ENCODE measurements at regions of chr6 and their contacts with region 1.

Region 1: DNA sequence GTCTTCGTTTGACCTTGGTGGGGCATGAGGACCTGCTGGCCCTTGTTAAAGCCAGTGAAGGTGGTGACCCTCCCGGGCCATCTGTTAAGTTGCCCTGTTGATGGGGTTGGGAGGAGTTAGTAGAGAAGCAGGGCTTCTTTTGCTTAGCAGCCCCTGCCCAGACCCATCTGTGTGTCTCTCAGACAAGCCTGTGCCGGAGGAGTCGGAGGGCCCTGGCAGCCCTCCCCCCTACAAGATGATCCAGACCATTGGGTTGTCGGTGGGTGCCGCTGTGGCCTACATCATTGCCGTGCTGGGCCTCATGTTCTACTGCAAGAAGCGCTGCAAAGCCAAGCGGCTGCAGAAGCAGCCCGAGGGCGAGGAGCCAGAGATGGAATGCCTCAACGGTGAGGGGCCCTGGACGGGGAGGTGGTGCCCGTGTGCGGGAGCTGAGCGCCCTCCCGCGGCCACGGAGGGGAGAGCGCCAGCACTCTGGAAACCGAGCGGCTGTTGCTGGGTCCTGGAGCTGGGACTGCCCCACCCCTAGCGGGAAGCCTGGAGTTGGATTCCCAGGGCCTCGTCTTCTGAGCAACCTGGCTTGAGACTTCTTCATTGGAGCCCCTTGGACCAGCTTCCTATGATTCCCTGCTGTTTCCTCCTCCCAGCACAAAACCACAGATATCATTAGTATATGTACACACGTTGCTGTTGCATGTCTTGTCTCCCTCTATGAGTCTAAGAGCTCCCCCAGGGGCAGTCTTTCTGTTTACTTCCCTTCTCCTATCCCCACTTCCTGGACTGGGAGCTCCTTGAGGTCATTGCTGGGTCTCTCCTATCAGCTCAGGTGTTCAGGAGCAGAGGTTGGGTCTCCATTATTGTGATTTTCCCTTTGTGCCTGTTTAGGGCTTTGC is 27.6 kb upstream of the SRF start:
- DNase-seq: peak; percentile 79
- H3K4me3 ChIP-seq: no peak overlapping the region
- H3K27ac ChIP-seq: peak overlapping the region; percentile 23
- H3K4me1 ChIP-seq: peaks cover 21% of the 10 kb centered on the region
- H3K27me3 ChIP-seq: no peaks in the 10 kb centered on the region
- CTCF ChIP-seq: peak; percentile 88 to 98

Region 2: DNA sequence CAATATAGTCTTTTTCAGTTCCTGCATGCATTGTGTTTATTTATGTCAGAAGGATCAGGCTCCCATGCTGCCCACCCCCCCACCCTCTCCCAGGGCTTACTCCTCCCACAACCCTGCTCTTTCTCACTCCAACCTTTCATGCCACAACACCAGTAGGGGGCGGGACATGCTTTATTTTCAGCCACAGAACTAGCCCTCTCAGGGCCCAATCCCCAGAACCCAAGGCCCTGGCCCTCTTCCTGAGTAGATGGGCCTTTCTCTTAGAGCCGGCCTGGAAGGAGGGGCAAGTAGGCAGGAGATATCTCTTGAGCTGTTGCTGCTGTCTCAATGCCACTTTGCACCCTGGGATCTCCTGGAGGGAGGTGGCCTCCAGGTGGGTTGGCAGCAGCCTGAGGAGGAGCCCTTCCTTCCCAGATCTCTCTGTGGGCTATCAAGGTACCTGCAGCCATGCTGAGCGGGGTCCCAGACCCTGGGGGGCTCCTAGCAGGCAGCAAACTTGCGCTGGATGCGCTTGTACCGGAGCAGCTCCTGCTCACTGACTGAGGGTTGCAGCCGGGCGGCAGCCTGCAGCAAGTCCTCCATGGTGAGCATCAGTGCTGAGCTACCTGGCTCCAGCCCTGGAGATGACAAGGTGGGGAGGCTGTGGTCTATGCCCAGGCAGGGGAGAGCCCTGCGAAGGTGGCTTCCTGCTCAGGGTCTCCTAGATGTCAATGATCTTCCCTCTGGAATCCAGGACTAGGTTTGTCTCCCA is 179.4 kb before region 1 on chr6:
- CTCF ChIA-PET with region 1: no interaction called
- dilution Hi-C with region 1: no loop called
- in situ Hi-C with region 1: no loop called
- intact Hi-C with region 1: loop called (anchors 1 kb)
- DNase-seq: peak; percentile 37
- H3K4me3 ChIP-seq: no peak overlapping the region
- H3K27ac ChIP-seq: no peak overlapping the region
- H3K4me1 ChIP-seq: peaks cover 16% of the 10 kb centered on the region
- H3K27me3 ChIP-seq: no peaks in the 10 kb centered on the region
- CTCF ChIP-seq: peak; percentile 21 to 40

Region 3: GRCh38 chr6:43013843-43014433 is 129.5 kb before region 1 on chr6 and contains the starts of genes KLHDC3 and MEA1:
- CTCF ChIA-PET with region 1: no interaction called
- dilution Hi-C with region 1: no loop called
- in situ Hi-C with region 1: no loop called
- intact Hi-C with region 1: loop called (anchors 1 kb)
- DNase-seq: peak; percentile 100
- H3K4me3 ChIP-seq: peak within 1 kb of the TSS; percentile 86 to 92 (median 91)
- H3K27ac ChIP-seq: peak within 1 kb of the TSS; percentile 51
- H3K4me1 ChIP-seq: peaks cover 18% of the 10 kb centered on the region
- H3K27me3 ChIP-seq: no peaks in the 10 kb centered on the region
- CTCF ChIP-seq: no peak
- total RNA-seq, gene KLHDC3: 36.4 to 56.2 TPM
- total RNA-seq, gene MEA1: 35.2 to 80.3 TPM

Region 4: DNA sequence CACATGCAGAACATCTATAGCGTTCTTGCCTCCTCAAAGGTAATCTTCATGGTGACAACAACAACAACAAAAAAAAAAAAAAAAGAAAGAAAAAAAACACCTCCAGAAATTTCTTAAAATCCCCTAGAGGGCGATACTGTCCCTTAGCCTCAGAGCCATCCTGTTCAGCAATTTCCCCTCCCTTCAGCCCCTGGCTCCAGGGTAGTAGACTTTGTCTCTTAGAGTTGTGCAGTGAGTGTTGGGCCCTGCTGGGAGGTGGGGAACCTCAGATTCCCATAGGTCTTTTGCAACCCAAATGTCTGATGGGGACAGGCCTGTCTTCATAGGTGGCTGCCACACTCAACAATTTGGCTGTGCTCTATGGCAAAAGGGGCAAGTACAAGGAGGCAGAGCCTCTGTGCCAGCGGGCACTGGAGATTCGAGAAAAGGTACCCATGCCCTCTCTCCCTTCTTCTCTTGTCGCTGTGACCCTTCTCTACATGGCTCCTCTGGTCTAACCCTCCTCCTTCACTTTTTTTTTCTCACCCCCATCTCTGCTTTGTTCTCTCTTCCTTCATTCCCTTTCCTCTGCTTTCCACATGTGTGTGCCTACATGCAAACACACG is 73.3 kb before region 1 on chr6:
- CTCF ChIA-PET with region 1: no interaction called
- dilution Hi-C with region 1: no loop called
- in situ Hi-C with region 1: no loop called
- intact Hi-C with region 1: loop called (anchors 1 kb)
- DNase-seq: peak; percentile 40
- H3K4me3 ChIP-seq: no peak overlapping the region
- H3K27ac ChIP-seq: no peak overlapping the region
- H3K4me1 ChIP-seq: no peaks in the 10 kb centered on the region
- H3K27me3 ChIP-seq: no peaks in the 10 kb centered on the region
- CTCF ChIP-seq: peak; percentile 61 to 72

Region 5: GRCh38 chr6:43075670-43076463 is 67.6 kb before region 1 on chr6 and contains the start of gene PTK7:
- CTCF ChIA-PET with region 1: no interaction called
- dilution Hi-C with region 1: loop called (anchors 5 kb)
- in situ Hi-C with region 1: no loop called
- intact Hi-C with region 1: loop called (anchors 1 kb)
- DNase-seq: peak; percentile 47
- H3K4me3 ChIP-seq: peak within 1 kb of the TSS; percentile 92 to 94 (median 94)
- H3K27ac ChIP-seq: peak within 1 kb of the TSS; percentile 75
- H3K4me1 ChIP-seq: peaks cover 17% of the 10 kb centered on the region
- H3K27me3 ChIP-seq: no peaks in the 10 kb centered on the region
- CTCF ChIP-seq: no peak
- total RNA-seq, gene PTK7: 141 to 277 TPM

Region 6: DNA sequence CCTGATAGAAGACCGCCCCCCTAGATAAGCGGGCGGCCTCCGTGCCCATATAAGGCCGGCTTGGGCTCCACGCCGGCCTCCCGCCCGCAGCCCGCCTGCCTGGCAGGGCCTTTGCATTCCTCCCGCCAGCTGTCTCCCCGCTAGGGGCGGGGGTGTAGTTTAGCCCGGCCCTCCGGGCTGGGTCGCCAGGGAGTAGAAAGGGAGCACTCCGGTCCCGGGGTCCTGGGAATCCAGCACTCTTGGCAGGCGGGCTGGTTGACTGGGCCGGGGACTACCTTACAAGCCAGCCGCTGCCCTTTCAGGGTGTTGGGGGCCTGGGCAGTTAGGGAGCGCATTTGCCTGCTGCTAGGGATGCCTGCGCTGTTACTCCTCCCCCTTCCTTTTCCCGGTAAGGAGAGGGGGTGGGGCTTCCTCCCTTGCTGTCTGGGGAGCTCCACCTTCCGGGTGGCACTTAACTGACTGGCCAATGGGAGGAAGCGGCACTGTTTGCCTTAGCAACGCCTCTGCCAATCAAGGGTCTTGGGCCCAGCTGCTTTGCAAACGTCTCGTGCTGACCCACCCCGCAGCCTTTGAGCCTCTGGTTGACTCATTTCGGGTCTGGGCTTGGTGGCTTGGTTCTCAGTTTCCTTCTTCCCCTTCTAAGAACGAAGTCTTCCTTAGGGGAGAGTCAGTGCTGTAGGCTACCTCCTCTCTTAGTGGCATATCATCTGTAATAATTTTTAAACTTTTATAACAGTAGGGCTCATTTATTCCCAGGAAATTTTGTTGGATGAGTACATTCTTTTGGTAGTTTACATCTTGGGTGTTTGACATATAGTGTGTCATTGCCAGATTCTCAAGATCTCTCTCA is 31.0 kb after region 1 on chr6:
- CTCF ChIA-PET with region 1: no interaction called
- dilution Hi-C with region 1: no loop called
- in situ Hi-C with region 1: no loop called
- intact Hi-C with region 1: loop called (anchors 2 kb)
- DNase-seq: peak; percentile 98
- H3K4me3 ChIP-seq: peak overlapping the region in 2 of 3 experiments; percentile 69 to 73
- H3K27ac ChIP-seq: peak overlapping the region; percentile 89
- H3K4me1 ChIP-seq: peaks cover 24% of the 10 kb centered on the region
- H3K27me3 ChIP-seq: no peaks in the 10 kb centered on the region
- CTCF ChIP-seq: peak in 1 of 2 donors; percentile 19

Region 7: DNA sequence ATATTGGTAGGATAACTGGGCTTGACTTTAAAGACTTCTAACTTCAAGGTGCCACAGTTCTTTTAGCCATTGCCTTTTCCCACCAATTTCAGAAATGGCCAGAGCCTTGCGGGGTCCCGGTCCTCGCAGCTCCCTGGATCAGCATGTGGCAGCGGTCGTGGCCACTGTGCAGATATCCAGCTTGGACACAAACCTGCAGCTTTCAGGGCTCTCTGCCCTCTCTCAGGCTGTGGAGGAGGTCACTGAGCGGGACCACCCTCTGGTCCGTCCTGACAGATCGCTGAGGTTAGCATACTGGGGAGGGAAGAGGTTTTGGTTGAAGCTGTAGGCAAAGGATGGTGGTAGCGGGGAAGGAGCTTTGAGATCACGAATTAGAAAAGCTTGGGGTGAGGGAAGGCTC is 45.0 kb after region 1 on chr6:
- CTCF ChIA-PET with region 1: no interaction called
- dilution Hi-C with region 1: no loop called
- in situ Hi-C with region 1: no loop called
- intact Hi-C with region 1: no loop called
- DNase-seq: no peak
- H3K4me3 ChIP-seq: peak overlapping the region in 1 of 3 experiments; percentile 27
- H3K27ac ChIP-seq: no peak overlapping the region
- H3K4me1 ChIP-seq: peaks cover 41% of the 10 kb centered on the region
- H3K27me3 ChIP-seq: no peaks in the 10 kb centered on the region
- CTCF ChIP-seq: no peak

Region 8: DNA sequence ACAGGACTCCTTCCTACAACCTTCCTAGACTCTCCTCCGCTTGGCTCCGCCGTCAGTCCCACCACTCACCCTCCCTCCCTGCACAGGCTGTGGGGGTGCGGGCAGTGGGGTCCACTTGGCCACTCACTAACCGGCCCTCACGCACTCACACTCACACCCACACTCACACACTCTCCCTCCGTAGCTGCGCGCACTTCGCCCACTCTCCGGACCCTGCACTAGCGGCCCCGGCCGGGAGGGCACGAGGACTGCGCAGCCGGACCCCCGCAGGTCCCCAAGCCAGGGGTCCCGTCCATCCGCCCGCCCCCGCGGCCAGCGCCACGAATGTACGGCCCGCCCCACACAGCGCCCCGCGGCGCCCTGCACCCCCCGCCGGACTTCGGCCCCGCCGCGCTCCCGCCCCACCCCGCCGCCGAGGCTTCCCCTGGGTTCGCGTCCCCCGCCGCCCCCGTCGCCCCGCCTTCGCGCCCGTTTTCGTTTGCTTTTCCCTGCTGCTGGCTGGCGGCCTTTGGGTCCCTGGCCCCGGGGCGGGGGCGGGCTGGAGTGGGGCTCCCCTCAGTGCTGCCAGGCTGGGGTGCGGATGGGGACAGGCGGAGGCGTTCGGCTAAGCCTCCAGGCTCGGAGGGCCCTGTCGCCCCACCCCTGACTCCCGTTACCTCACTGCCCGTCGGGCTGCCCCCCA is 131.6 kb after region 1 on chr6:
- CTCF ChIA-PET with region 1: no interaction called
- dilution Hi-C with region 1: no loop called
- in situ Hi-C with region 1: no loop called
- intact Hi-C with region 1: no loop called
- DNase-seq: no peak
- H3K4me3 ChIP-seq: peak overlapping the region in 1 of 3 experiments; percentile 24
- H3K27ac ChIP-seq: no peak overlapping the region
- H3K4me1 ChIP-seq: no peaks in the 10 kb centered on the region
- H3K27me3 ChIP-seq: peaks cover 6% of the 10 kb centered on the region
- CTCF ChIP-seq: no peak

Measured in mammary epithelial cell (primary cell).